ENCODE measurements at regions of chr4 and their contacts with region 1.

Region 1: DNA sequence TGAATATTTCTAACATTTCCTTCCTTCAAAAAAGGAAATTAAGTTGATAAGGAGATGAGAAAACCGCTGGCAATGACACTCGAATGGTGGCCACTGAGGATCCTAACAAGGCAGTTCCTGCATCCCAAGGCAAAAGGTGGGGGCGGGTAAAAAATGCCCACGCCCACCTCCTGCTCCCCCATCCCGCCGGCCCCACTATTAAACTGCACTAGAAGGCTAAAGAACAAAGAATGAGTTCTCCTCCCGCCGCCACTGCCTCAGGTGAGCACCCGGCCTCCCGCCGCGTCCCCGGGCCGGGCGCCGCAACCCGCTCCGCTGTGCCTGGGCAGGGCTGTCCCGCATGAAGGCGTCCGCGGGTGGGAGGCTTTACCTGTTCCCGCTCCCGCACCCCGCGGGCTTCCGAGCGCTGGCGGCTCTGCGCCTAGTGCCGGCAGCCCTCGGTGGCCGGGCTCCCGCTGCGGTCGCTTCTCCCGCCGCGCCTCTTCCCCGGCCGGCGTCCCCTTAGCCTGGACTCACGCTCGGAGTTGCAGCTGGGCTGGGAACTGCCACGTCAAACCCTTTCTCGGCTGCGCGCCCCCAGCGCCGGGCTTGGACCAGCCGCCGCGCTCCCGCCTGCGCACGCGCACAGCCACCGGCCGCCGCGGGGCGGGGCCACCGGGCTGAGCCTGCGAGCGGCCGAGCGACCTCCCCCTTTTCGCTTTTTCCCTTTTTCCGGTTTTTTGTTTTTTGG is at the start of gene SEC24D:
- DNase-seq: peak; percentile 89
- ATAC-seq: peak; percentile 88
- H3K4me3 ChIP-seq: peak within 1 kb of the TSS; percentile 59 to 98 (median 89)
- H3K4me3 Mint-ChIP-seq: peak within 1 kb of the TSS; percentile 97
- H3K27ac ChIP-seq: peak within 1 kb of the TSS; percentile 48 to 87
- H3K27ac Mint-ChIP-seq: peak within 1 kb of the TSS; percentile 93
- H3K4me1 ChIP-seq: peaks cover 10 to 11% of the 10 kb centered on the region in 2 donors
- H3K4me1 Mint-ChIP-seq: peaks cover 17% of the 10 kb centered on the region
- H3K27me3 ChIP-seq: no peaks in the 10 kb centered on the region
- H3K27me3 Mint-ChIP-seq: peaks cover 4% of the 10 kb centered on the region
- CTCF ChIP-seq: peak; percentile 11
- total RNA-seq, gene SEC24D: 15.8 and 19.8 TPM in 2 replicates

Region 2: DNA sequence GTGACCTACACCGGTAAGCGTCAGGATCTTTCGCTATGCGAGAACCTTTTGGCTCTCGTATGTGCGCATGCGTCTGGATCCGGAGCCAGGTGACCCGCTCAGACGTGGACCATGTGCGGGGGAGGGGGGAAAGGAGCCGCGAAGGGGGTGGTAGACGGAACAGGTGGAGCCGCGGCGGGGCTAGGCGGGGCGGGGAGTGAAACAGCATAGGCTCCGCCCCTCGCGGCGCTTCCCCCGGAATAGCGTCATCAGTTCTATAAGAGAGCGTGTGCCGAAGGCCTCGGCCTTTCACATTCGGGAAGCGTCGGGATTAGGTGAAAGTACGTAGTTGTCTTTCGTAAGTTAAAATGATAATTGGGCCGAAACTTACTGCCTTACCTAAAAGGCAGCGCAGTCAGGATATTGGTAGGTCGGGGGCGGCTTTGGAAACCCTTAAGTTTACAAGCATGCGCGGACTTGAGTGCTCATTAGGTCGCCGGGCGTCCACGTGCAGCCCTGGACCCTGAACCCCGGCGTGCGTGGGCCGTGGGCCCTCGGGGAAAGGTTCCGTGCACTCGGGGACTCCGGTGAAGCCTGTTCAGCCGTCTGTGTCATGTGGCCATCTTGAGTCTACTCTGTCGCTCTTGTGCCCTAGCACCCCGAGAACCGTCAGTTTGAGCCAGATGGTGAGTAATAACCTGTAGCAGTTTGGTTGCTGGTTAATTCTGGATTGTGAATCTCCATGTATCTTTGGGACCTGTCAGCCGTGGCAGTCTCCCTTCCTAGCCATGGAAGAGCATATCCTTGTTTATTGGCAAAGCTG is 557.1 kb before region 1 on chr4:
- CTCF ChIA-PET with region 1: no interaction called
- POLR2A ChIA-PET with region 1: no interaction called
- intact Hi-C with region 1: loop called (anchors 5 kb)
- DNase-seq: peak; percentile 99
- ATAC-seq: peak; percentile 99
- H3K4me3 ChIP-seq: peak overlapping the region; percentile 81 to 95 (median 90)
- H3K4me3 Mint-ChIP-seq: peak overlapping the region; percentile 95
- H3K27ac ChIP-seq: peak overlapping the region; percentile 95 to 96
- H3K27ac Mint-ChIP-seq: peak overlapping the region; percentile 91
- H3K4me1 ChIP-seq: peaks cover 25 to 28% of the 10 kb centered on the region in 2 donors
- H3K4me1 Mint-ChIP-seq: peaks cover 43% of the 10 kb centered on the region
- H3K27me3 ChIP-seq: no peaks in the 10 kb centered on the region
- H3K27me3 Mint-ChIP-seq: no peaks in the 10 kb centered on the region
- CTCF ChIP-seq: no peak

Region 3: GRCh38 chr4:118684873-118685811 is 150.6 kb before region 1 on chr4 and contains the start of gene METTL14:
- CTCF ChIA-PET with region 1: no interaction called
- POLR2A ChIA-PET with region 1: no interaction called
- intact Hi-C with region 1: loop called (anchors 5 kb)
- DNase-seq: peak; percentile 93
- ATAC-seq: peak; percentile 96
- H3K4me3 ChIP-seq: peak within 1 kb of the TSS; percentile 63 to 94 (median 83)
- H3K4me3 Mint-ChIP-seq: peak within 1 kb of the TSS; percentile 95
- H3K27ac ChIP-seq: peak within 1 kb of the TSS; percentile 71 to 86
- H3K27ac Mint-ChIP-seq: peak within 1 kb of the TSS; percentile 93
- H3K4me1 ChIP-seq: peaks cover 11 to 16% of the 10 kb centered on the region in 2 donors
- H3K4me1 Mint-ChIP-seq: peaks cover 21% of the 10 kb centered on the region
- H3K27me3 ChIP-seq: no peaks in the 10 kb centered on the region
- H3K27me3 Mint-ChIP-seq: no peaks in the 10 kb centered on the region
- CTCF ChIP-seq: no peak
- total RNA-seq, gene METTL14: 65.6 and 74.8 TPM in 2 replicates

Region 4: GRCh38 chr4:118850488-118851173 is 14.9 kb after region 1 on chr4:
- CTCF ChIA-PET with region 1: interaction called, 3 read pairs
- POLR2A ChIA-PET with region 1: interaction called, 3 read pairs
- intact Hi-C with region 1: loop called (anchors 1 kb)
- DNase-seq: peak; percentile 63
- ATAC-seq: peak; percentile 82
- H3K4me3 ChIP-seq: peak overlapping the region; percentile 39 to 90 (median 61)
- H3K4me3 Mint-ChIP-seq: peak overlapping the region; percentile 94
- H3K27ac ChIP-seq: peak overlapping the region; percentile 47 to 54
- H3K27ac Mint-ChIP-seq: peak overlapping the region; percentile 87
- H3K4me1 ChIP-seq: peaks cover 13 to 14% of the 10 kb centered on the region in 2 donors
- H3K4me1 Mint-ChIP-seq: peaks cover 20% of the 10 kb centered on the region
- H3K27me3 ChIP-seq: peaks cover 0 to 2% (median 0%) of the 10 kb centered on the region in 4 experiments
- H3K27me3 Mint-ChIP-seq: peaks cover 3% of the 10 kb centered on the region
- CTCF ChIP-seq: no peak

Region 5: GRCh38 chr4:119628308-119629141 is 792.8 kb after region 1 on chr4 and contains the start of gene PDE5A:
- CTCF ChIA-PET with region 1: no interaction called
- POLR2A ChIA-PET with region 1: no interaction called
- intact Hi-C with region 1: loop called (anchors 2 kb)
- DNase-seq: peak; percentile 86
- ATAC-seq: peak; percentile 80
- H3K4me3 ChIP-seq: peak within 1 kb of the TSS; percentile 42 to 77 (median 63)
- H3K4me3 Mint-ChIP-seq: peak within 1 kb of the TSS; percentile 87
- H3K27ac ChIP-seq: peak within 1 kb of the TSS; percentile 40 to 51
- H3K27ac Mint-ChIP-seq: peak within 1 kb of the TSS; percentile 47
- H3K4me1 ChIP-seq: peaks cover 18 to 26% of the 10 kb centered on the region in 2 donors
- H3K4me1 Mint-ChIP-seq: peaks cover 26% of the 10 kb centered on the region
- H3K27me3 ChIP-seq: peaks cover 0 to 26% (median 11%) of the 10 kb centered on the region in 4 experiments
- H3K27me3 Mint-ChIP-seq: peaks cover 14% of the 10 kb centered on the region
- CTCF ChIP-seq: peak; percentile 78
- total RNA-seq, gene PDE5A: 1.4 and 2.6 TPM in 2 replicates

Measured in B cell (primary cell).